ENCODE measurements at regions of chr4 and their contacts with region 1.

Region 1: GRCh38 chr4:88211473-88212252 is 53.2 kb upstream of the ABCG2 start:
- DNase-seq: peak in 3 of 6 donors; percentile 16 to 40 (median 27)
- ATAC-seq: peak in 3 of 4 donors; percentile 54 to 65 (median 57)
- H3K4me3 ChIP-seq: no peak overlapping the region
- H3K27ac ChIP-seq: no peak overlapping the region
- H3K4me1 ChIP-seq: peaks cover 0 to 2% (median 0%) of the 10 kb centered on the region in 3 donors
- H3K27me3 ChIP-seq: no peaks in the 10 kb centered on the region
- CTCF ChIP-seq: peak in 3 of 4 donors; percentile 15 to 67 (median 49)

Region 2: GRCh38 chr4:87848622-87849351 is 362.9 kb before region 1 on chr4:
- intact Hi-C with region 1: loop called in 1 of 3 experiments (anchors 10 kb)
- DNase-seq: peak in 3 of 6 donors; percentile 21 to 54 (median 46)
- ATAC-seq: peak; percentile 87 to 90 (median 90)
- H3K4me3 ChIP-seq: no peak overlapping the region
- H3K27ac ChIP-seq: no peak overlapping the region
- H3K4me1 ChIP-seq: peaks cover 0 to 16% (median 0%) of the 10 kb centered on the region in 3 donors
- H3K27me3 ChIP-seq: no peaks in the 10 kb centered on the region
- CTCF ChIP-seq: peak; percentile 15 to 56 (median 48)

Region 3: GRCh38 chr4:88033309-88033708 is 178.4 kb before region 1 on chr4:
- intact Hi-C with region 1: loop called in 2 of 3 experiments (anchors 5 to 10 kb)
- DNase-seq: peak in 2 of 6 donors; percentile 52 to 65
- ATAC-seq: peak; percentile 71 to 97 (median 92)
- H3K4me3 ChIP-seq: no peak overlapping the region
- H3K27ac ChIP-seq: no peak overlapping the region
- H3K4me1 ChIP-seq: no peaks in the 10 kb centered on the region
- H3K27me3 ChIP-seq: no peaks in the 10 kb centered on the region
- CTCF ChIP-seq: peak; percentile 48 to 57 (median 50)

Region 4: DNA sequence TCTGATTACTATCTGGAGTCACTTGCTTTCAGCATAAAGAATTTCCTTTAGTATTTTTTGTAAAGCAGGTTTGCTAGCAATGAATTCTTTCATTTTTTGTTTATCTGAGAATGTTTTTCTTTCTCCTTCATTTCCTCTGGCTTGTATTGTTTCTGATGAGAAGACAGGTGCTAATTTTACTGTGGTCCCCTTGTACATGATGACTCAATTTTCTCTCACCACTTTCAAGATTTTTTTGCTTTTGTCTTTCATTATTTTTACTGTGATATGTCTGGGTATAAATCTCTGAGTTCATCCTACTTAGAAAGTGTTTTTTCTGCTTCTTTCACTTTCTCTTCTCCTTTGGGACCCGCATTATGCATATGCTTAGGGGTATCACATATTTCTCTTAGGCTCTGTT is 141.6 kb before region 1 on chr4:
- intact Hi-C with region 1: no loop called
- DNase-seq: no peak
- ATAC-seq: no peak
- H3K4me3 ChIP-seq: no peak overlapping the region
- H3K27ac ChIP-seq: no peak overlapping the region
- H3K4me1 ChIP-seq: no peaks in the 10 kb centered on the region
- H3K27me3 ChIP-seq: no peaks in the 10 kb centered on the region
- CTCF ChIP-seq: no peak

Region 5: DNA sequence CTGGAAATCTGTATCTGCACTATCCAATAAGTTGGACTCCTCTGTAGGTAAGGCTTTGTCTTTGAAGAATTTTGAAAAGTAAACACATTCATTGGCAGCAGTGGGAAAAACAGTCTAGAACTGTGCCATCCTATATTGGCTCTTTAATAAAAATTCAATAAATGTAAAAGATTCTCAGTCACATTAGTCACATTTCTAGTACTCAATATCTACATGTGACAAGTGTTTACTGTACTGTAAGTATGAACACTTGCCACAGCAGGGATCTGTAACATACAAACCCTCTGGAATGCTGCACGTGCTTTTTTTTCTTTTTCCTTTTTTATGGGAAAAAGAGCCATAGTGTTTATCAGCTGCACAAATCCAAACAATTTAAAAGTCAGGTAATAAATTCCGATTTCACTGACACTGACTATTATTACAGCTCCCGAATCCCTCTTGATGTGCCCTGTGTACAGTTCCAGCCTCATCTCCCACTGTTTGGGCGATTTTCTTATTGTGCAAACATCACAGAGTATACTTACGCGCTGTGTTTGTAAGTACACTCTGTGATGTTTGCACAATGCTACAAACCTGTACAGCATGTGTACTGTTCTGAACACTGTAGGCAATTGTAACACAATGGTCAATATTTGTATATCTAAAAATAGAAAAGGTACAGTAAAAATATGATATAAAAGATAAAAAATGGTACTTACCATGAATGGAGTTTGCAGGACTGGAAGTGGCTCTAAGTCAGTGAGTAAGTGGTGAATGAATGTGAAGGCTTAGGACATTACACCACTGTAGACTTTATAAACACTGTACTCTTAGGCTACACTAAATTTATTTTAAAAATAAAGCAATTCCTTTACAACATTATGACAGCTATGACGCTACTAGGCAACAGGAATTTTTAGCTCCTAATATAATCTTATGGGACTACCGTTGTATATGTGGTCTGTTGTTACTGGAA is 303.2 kb after region 1 on chr4:
- intact Hi-C with region 1: loop called in 2 of 3 experiments (anchors 5 kb)
- DNase-seq: no peak
- ATAC-seq: peak; percentile 82 to 93 (median 86)
- H3K4me3 ChIP-seq: no peak overlapping the region
- H3K27ac ChIP-seq: no peak overlapping the region
- H3K4me1 ChIP-seq: peaks cover 4 to 6% (median 5%) of the 10 kb centered on the region in 3 donors
- H3K27me3 ChIP-seq: no peaks in the 10 kb centered on the region
- CTCF ChIP-seq: no peak